ENCODE measurements at regions of chr5 and their contacts with region 1.

Region 1: GRCh38 chr5:143016777-143017516 is 246.8 kb downstream of the ARHGAP26 start:
- DNase-seq: peak in 10 of 14 experiments; percentile 14 to 68 (median 38)
- ATAC-seq: peak; percentile 34
- H3K4me3 ChIP-seq: no peak overlapping the region
- H3K4me3 Mint-ChIP-seq: no peak overlapping the region
- H3K27ac ChIP-seq: no peak overlapping the region
- H3K27ac Mint-ChIP-seq: no peak overlapping the region
- H3K4me1 ChIP-seq: no peaks in the 10 kb centered on the region
- H3K4me1 Mint-ChIP-seq: peaks cover 5% of the 10 kb centered on the region
- H3K27me3 ChIP-seq: no peaks in the 10 kb centered on the region
- H3K27me3 Mint-ChIP-seq: no peaks in the 10 kb centered on the region
- CTCF ChIP-seq: peak; percentile 17

Region 2: GRCh38 chr5:142426129-142427014 is 590.6 kb before region 1 on chr5:
- CTCF ChIA-PET with region 1: no interaction called
- POLR2A ChIA-PET with region 1: no interaction called
- intact Hi-C with region 1: loop called in 1 of 2 experiments (anchors 5 kb)
- DNase-seq: peak in 12 of 14 experiments; percentile 7 to 83 (median 28)
- ATAC-seq: peak; percentile 83
- H3K4me3 ChIP-seq: no peak overlapping the region
- H3K4me3 Mint-ChIP-seq: peak overlapping the region; percentile 14
- H3K27ac ChIP-seq: no peak overlapping the region
- H3K27ac Mint-ChIP-seq: peak overlapping the region; percentile 9
- H3K4me1 ChIP-seq: peaks cover 52% of the 10 kb centered on the region
- H3K4me1 Mint-ChIP-seq: peaks cover 59% of the 10 kb centered on the region
- H3K27me3 ChIP-seq: no peaks in the 10 kb centered on the region
- H3K27me3 Mint-ChIP-seq: no peaks in the 10 kb centered on the region
- CTCF ChIP-seq: no peak

Measured in CD4-positive, alpha-beta T cell (primary cell).